Naive thymus-derived CD4-positive, alpha-beta T cell (primary cell): ENCODE measurements at regions of chr13 and their contacts with region 1.

Region 1: GRCh38 chr13:40102856-40103255 is 447.4 kb downstream of the COG6 start:
- DNase-seq: peak in 3 of 9 donors; percentile 8 to 81 (median 10)
- ATAC-seq: peak; percentile 42
- H3K4me3 ChIP-seq: no peak overlapping the region
- H3K4me3 Mint-ChIP-seq: peak overlapping the region in 1 of 10 donors; percentile 55
- H3K27ac ChIP-seq: no peak overlapping the region
- H3K27ac Mint-ChIP-seq: peak overlapping the region in 5 of 9 donors; percentile 17 to 90 (median 65)
- H3K4me1 ChIP-seq: no peaks in the 10 kb centered on the region
- H3K4me1 Mint-ChIP-seq: peaks cover 5 to 45% (median 22%) of the 10 kb centered on the region in 7 donors
- H3K27me3 ChIP-seq: no peaks in the 10 kb centered on the region
- H3K27me3 Mint-ChIP-seq: no peaks in the 10 kb centered on the region

Region 2: GRCh38 chr13:40116008-40116407 is 13.2 kb after region 1 on chr13:
- CTCF ChIA-PET with region 1: interaction called, 3 read pairs
- POLR2A ChIA-PET with region 1: interaction called, 3 read pairs
- intact Hi-C with region 1: loop called in 1 of 2 experiments (anchors 2 kb)
- DNase-seq: peak in 1 of 9 donors; percentile 38
- ATAC-seq: peak; percentile 27
- H3K4me3 ChIP-seq: no peak overlapping the region
- H3K4me3 Mint-ChIP-seq: peak overlapping the region in 1 of 10 donors; percentile 51
- H3K27ac ChIP-seq: no peak overlapping the region
- H3K27ac Mint-ChIP-seq: peak overlapping the region in 1 of 9 donors; percentile 88
- H3K4me1 ChIP-seq: no peaks in the 10 kb centered on the region
- H3K4me1 Mint-ChIP-seq: peaks cover 0 to 22% (median 4%) of the 10 kb centered on the region in 7 donors
- H3K27me3 ChIP-seq: no peaks in the 10 kb centered on the region
- H3K27me3 Mint-ChIP-seq: peaks cover 0 to under 1% (median 0%) of the 10 kb centered on the region in 5 donors

Region 3: GRCh38 chr13:40132249-40132648 is 29.4 kb after region 1 on chr13:
- CTCF ChIA-PET with region 1: no interaction called
- POLR2A ChIA-PET with region 1: no interaction called
- intact Hi-C with region 1: loop called in 1 of 2 experiments (anchors 2 kb)
- DNase-seq: peak in 1 of 9 donors; percentile 48
- ATAC-seq: no peak
- H3K4me3 ChIP-seq: no peak overlapping the region
- H3K4me3 Mint-ChIP-seq: peak overlapping the region in 1 of 10 donors; percentile 45
- H3K27ac ChIP-seq: no peak overlapping the region
- H3K27ac Mint-ChIP-seq: peak overlapping the region in 1 of 9 donors; percentile 77
- H3K4me1 ChIP-seq: peaks cover 0 to 5% of the 10 kb centered on the region in 2 donors
- H3K4me1 Mint-ChIP-seq: peaks cover 11 to 50% (median 13%) of the 10 kb centered on the region in 7 donors
- H3K27me3 ChIP-seq: no peaks in the 10 kb centered on the region
- H3K27me3 Mint-ChIP-seq: no peaks in the 10 kb centered on the region